Sciatic nerve (tissue), 2 donors: ENCODE measurements at regions of chr14 and their contacts with region 1.

Region 1: DNA sequence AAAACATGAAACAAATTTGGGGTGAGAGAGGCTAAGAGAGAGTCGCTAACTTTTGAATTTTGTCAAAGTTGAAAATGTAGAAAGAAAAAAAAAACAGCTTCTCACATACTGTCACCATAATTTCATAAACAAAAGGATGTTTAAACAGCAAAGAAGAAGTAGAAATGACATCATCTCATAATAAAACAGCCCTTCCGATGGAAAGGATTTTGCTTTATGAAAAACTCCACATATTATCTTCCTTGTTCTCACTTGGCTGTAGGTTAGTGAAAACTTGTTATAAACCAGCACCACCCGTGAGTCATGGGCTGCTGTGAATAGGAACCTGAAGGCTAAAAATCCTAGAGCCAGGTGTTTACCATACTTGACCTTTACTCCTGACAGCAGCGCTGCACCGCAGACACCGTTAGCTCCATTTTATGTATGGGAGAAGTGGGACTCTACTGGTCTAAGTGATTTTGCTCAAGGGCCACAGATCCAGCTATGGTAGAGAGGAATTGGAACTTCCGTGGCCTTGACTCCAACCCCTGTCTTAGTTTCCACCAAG is 63.0 kb upstream of the VRK1 start:
- DNase-seq: no peak
- ATAC-seq: no peak

Region 2: DNA sequence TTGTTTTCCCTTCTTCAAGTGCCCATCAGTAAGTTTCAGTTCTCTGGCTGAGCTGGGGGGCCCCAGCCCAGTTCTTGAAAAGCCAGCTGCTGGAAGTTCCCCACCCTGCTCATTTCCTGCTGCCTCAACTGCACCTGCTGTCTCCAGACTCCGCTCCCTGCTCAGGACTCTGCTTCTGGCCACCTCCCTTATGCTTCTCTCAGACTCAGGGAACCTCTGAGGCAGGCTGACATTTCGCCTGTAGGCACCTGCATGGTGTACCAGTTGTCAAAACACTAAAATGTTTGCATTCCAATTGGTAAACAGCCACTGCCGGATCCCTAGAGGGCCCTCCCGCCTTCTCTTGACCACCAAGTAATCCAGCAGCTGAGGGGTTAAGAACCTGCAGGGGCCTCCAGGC is 73.5 kb before region 1 on chr14:
- intact Hi-C with region 1: no loop called
- DNase-seq: no peak
- ATAC-seq: no peak

Region 3: GRCh38 chr14:97138801-97139200 is 404.7 kb after region 1 on chr14:
- intact Hi-C with region 1: loop called (anchors 5 kb)
- DNase-seq: no peak
- ATAC-seq: no peak